HepG2 (cell line): ENCODE measurements at regions of chr9 and their contacts with region 1.

Region 1: GRCh38 chr9:26561928-26562327 is 330.7 kb downstream of the CAAP1 start:
- DNase-seq: no peak
- ATAC-seq: no peak
- H3K4me3 ChIP-seq: no peak overlapping the region
- H3K27ac ChIP-seq: no peak overlapping the region
- H3K4me1 ChIP-seq: peaks cover 7% of the 10 kb centered on the region
- H3K27me3 ChIP-seq: no peaks in the 10 kb centered on the region
- CTCF ChIP-seq: no peak
- EP300 ChIP-seq: no peak
- POLR2A ChIP-seq: no peak
- RAD21 ChIP-seq: no peak

Region 2: DNA sequence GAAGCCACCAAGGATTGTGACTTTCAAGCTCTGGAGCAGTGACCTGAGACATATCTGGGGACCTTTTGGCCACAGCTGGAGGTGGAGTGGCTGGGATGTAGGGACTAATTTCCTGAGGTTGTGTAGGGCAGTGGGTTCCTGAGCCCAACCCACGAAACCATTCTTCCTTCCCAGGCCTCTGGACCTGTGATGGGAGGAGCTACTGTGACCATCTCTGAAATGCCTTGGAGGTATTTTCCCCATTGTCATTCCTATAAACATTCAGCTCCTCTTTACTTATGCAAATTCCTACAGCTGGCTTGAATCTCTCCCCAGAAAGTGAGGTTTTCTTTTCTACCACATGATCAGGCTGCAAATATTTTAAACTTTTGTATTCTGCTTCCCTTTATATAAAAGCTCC is 1056.3 kb before region 1 on chr9:
- CTCF ChIA-PET with region 1: no interaction called
- POLR2A ChIA-PET with region 1: no interaction called
- in situ Hi-C with region 1: no loop called
- intact Hi-C with region 1: no loop called
- DNase-seq: no peak
- ATAC-seq: no peak
- H3K4me3 ChIP-seq: no peak overlapping the region
- H3K27ac ChIP-seq: no peak overlapping the region
- H3K4me1 ChIP-seq: no peaks in the 10 kb centered on the region
- H3K27me3 ChIP-seq: no peaks in the 10 kb centered on the region
- CTCF ChIP-seq: no peak
- EP300 ChIP-seq: no peak
- POLR2A ChIP-seq: no peak
- RAD21 ChIP-seq: no peak

Region 3: GRCh38 chr9:26523577-26523976 is 38.4 kb before region 1 on chr9:
- CTCF ChIA-PET with region 1: no interaction called
- POLR2A ChIA-PET with region 1: no interaction called
- in situ Hi-C with region 1: no loop called
- intact Hi-C with region 1: loop called (anchors 1 kb)
- DNase-seq: no peak
- ATAC-seq: no peak
- H3K4me3 ChIP-seq: no peak overlapping the region
- H3K27ac ChIP-seq: no peak overlapping the region
- H3K4me1 ChIP-seq: no peaks in the 10 kb centered on the region
- H3K27me3 ChIP-seq: no peaks in the 10 kb centered on the region
- CTCF ChIP-seq: no peak
- EP300 ChIP-seq: no peak
- POLR2A ChIP-seq: no peak
- RAD21 ChIP-seq: no peak